ENCODE measurements at regions of chr17 and their contacts with region 1.

Region 1: DNA sequence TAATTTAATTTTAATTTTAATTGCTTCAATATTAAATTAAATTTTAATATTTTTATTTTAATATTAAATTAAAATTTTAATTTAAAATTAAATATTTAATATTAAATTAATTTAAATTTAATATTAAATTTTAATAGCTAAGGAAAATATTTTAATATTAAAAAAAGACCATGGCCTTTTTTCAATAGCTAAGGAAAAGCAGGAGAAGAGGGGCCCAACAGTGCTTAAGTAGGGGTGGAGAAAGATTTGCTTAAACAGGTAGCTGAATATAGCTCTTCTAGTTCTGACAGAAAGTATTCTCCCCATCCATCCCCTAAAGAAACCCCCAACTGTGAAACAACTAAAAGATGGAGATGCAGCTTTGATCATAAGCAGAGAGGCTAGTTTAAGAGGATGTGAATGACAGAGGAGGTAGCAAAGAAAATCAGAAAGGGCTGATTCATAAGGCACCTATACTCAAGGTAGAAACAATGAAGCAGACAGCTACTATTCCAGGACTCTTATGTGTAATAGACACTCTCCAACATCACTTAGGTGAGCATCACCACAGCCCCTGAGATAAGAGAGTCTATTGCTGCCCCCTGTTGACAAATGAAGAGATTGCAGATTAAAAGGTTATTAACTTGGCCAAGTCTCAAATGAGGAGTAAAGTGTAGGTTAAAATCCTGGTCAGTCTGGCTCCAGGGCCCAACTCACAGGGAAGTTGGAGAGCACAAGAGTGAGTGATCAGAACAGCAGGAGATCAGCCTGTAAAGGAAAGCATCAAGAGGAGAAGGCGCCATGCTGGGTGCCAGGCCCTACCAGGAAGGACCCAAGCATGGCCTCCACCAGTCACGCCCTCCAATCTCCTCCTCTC is 7.8 kb upstream of the RNASEK start:
- DNase-seq: no peak
- ATAC-seq: peak; percentile 78
- H3K4me3 Mint-ChIP-seq: no peak overlapping the region
- H3K27ac Mint-ChIP-seq: no peak overlapping the region
- H3K4me1 Mint-ChIP-seq: no peaks in the 10 kb centered on the region
- H3K27me3 Mint-ChIP-seq: no peaks in the 10 kb centered on the region
- CTCF ChIP-seq: peak; percentile 62

Region 2: GRCh38 chr17:6666077-6666521 is 338.5 kb before region 1 on chr17:
- CTCF ChIA-PET with region 1: interaction called, 14 read pairs
- POLR2A ChIA-PET with region 1: no interaction called
- DNase-seq: peak; percentile 78
- ATAC-seq: peak; percentile 95
- H3K4me3 Mint-ChIP-seq: no peak overlapping the region
- H3K27ac Mint-ChIP-seq: no peak overlapping the region
- H3K4me1 Mint-ChIP-seq: peaks cover 12% of the 10 kb centered on the region
- H3K27me3 Mint-ChIP-seq: peaks cover 41% of the 10 kb centered on the region
- CTCF ChIP-seq: peak; percentile 68

Region 3: GRCh38 chr17:6843241-6843880 is 161.3 kb before region 1 on chr17:
- CTCF ChIA-PET with region 1: interaction called, 18 read pairs
- POLR2A ChIA-PET with region 1: no interaction called
- DNase-seq: no peak
- ATAC-seq: no peak
- H3K4me3 Mint-ChIP-seq: no peak overlapping the region
- H3K27ac Mint-ChIP-seq: no peak overlapping the region
- H3K4me1 Mint-ChIP-seq: no peaks in the 10 kb centered on the region
- H3K27me3 Mint-ChIP-seq: peaks cover 32% of the 10 kb centered on the region
- CTCF ChIP-seq: no peak

Region 4: GRCh38 chr17:6868579-6868978 is 136.0 kb before region 1 on chr17:
- CTCF ChIA-PET with region 1: no interaction called
- POLR2A ChIA-PET with region 1: no interaction called
- DNase-seq: no peak
- ATAC-seq: no peak
- H3K4me3 Mint-ChIP-seq: no peak overlapping the region
- H3K27ac Mint-ChIP-seq: no peak overlapping the region
- H3K4me1 Mint-ChIP-seq: no peaks in the 10 kb centered on the region
- H3K27me3 Mint-ChIP-seq: no peaks in the 10 kb centered on the region; the same call in 1 of the 2 replicates
- CTCF ChIP-seq: no peak

Region 5: GRCh38 chr17:6913608-6914443 is 90.8 kb before region 1 on chr17:
- CTCF ChIA-PET with region 1: interaction called, 48 read pairs
- POLR2A ChIA-PET with region 1: no interaction called
- DNase-seq: peak; percentile 85
- ATAC-seq: peak; percentile 83
- H3K4me3 Mint-ChIP-seq: peak overlapping the region; percentile 46
- H3K27ac Mint-ChIP-seq: no peak overlapping the region
- H3K4me1 Mint-ChIP-seq: peaks cover 4% of the 10 kb centered on the region
- H3K27me3 Mint-ChIP-seq: peaks cover 55% of the 10 kb centered on the region
- CTCF ChIP-seq: peak; percentile 75

Region 6: GRCh38 chr17:7056386-7056785 is 51.8 kb after region 1 on chr17:
- CTCF ChIA-PET with region 1: no interaction called
- POLR2A ChIA-PET with region 1: no interaction called
- DNase-seq: no peak
- ATAC-seq: no peak
- H3K4me3 Mint-ChIP-seq: no peak overlapping the region
- H3K27ac Mint-ChIP-seq: no peak overlapping the region
- H3K4me1 Mint-ChIP-seq: peaks cover 7% of the 10 kb centered on the region; the same call in 1 of the 2 replicates
- H3K27me3 Mint-ChIP-seq: peaks cover 38% of the 10 kb centered on the region
- CTCF ChIP-seq: no peak

Region 7: GRCh38 chr17:7177196-7177953 is 172.7 kb after region 1 on chr17:
- CTCF ChIA-PET with region 1: interaction called, 10 read pairs
- POLR2A ChIA-PET with region 1: no interaction called
- DNase-seq: peak; percentile 85
- ATAC-seq: peak; percentile 68
- H3K4me3 Mint-ChIP-seq: no peak overlapping the region
- H3K27ac Mint-ChIP-seq: peak overlapping the region; percentile 80; the same call in 1 of the 2 replicates
- H3K4me1 Mint-ChIP-seq: peaks cover 12% of the 10 kb centered on the region
- H3K27me3 Mint-ChIP-seq: peaks cover 10% of the 10 kb centered on the region
- CTCF ChIP-seq: peak; percentile 77